GM10248 (cell line): ENCODE measurements at regions of chr16 and their contacts with region 1.

Region 1: DNA sequence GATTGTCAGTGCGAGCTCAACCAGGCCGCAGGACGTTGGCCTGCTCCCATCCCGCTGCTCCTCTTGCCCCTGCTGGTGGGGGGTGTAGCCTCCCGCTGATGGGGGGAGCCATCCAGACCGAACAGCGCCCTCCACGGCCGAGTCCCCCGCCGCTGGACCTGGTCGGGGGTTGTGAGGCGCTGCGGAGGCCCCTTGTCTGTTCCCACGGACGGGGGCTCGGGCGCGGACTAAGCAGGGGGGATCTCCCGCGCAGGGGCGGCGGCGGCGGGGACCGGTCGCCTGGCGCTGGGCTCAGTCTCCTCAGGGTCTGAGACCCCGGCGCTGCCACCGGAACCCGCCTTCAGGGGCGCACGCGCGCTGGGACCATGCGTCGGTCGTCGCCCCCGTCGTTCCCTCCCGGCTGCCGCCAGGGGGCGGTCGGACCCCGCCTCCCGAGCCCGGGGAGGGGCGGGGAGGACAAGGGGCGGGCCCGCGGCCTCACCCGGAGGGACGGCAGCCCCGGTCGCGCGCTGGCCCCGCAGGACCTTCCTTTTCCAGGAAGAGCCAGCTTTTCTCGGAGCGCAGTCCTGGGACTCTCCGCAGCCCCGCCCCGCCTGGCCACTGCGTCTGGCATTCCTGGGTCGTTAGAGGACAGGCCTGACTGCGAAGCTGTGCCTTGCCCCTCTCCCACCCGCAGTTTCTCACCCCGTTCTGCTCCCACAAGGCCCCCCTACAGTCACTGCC is 6.3 kb upstream of the IL32 start:
- DNase-seq: peak; percentile 95
- CTCF ChIP-seq: peak; percentile 93

Region 2: DNA sequence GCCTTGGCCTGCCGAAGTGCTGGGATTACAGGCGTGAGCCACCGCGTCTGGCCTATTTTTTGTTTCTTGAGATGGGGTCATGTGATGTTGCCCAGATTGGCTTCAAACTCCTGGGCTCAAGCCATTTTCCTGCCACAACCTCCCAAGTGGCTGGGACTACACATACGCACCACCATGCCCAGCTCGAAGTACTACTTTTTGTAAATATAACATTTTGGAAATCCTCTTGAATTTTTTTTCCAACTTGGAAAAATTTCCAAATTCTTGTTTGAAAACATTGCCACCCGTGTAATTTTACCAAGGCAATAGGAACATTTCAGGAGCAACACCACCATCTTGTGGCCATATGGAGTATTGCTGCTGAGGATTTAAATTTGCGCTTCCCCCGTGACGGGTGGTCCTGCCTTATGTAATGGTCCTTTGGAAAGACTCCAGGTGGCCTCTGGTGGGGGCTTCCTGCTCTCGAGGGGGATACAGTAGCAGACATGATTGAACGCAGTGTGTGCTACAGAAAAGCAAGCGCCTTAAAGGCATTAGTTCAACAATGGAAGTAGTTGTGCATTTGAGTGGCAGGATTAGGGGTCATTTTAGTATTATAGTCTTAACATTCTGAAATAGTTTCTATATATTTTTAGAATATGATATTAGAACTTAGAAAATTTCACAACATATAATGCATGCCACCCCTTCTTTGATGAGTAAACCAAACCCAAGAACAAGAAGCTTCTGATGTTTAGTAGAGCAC is 139.5 kb before region 1 on chr16:
- CTCF ChIA-PET with region 1: no interaction called
- POLR2A ChIA-PET with region 1: no interaction called
- DNase-seq: peak; percentile 60
- CTCF ChIP-seq: peak; percentile 82

Region 3: GRCh38 chr16:2963723-2964474 is 95.3 kb before region 1 on chr16 and contains the start of gene KREMEN2:
- CTCF ChIA-PET with region 1: no interaction called
- POLR2A ChIA-PET with region 1: no interaction called
- DNase-seq: peak; percentile 56
- CTCF ChIP-seq: no peak

Region 4: DNA sequence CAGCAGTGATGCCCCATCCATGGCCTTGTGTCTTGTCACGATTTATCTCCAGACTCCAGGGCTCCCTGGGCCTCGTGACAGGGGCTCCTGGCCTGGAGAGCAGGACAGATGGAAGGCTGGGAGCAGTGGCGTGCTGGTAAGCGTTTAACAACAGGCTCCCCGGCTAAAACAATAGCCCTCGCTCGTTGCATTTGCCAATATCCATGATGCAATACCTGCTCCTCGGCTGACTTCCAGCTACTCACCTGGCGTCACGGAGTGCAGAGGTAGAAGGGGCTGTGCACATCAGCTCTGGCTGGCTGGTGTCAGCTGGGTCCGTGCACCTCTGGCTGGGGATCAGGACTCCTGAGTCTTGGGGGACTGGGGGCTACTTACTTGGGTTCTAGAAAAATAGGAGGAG is 20.9 kb before region 1 on chr16:
- CTCF ChIA-PET with region 1: interaction called, 75 read pairs
- POLR2A ChIA-PET with region 1: interaction called, 6 read pairs
- DNase-seq: no peak
- CTCF ChIP-seq: no peak

Region 5: GRCh38 chr16:3074860-3075522 is 15.8 kb after region 1 on chr16:
- CTCF ChIA-PET with region 1: interaction called, 38 read pairs
- POLR2A ChIA-PET with region 1: no interaction called
- DNase-seq: peak; percentile 65
- CTCF ChIP-seq: no peak

Region 6: DNA sequence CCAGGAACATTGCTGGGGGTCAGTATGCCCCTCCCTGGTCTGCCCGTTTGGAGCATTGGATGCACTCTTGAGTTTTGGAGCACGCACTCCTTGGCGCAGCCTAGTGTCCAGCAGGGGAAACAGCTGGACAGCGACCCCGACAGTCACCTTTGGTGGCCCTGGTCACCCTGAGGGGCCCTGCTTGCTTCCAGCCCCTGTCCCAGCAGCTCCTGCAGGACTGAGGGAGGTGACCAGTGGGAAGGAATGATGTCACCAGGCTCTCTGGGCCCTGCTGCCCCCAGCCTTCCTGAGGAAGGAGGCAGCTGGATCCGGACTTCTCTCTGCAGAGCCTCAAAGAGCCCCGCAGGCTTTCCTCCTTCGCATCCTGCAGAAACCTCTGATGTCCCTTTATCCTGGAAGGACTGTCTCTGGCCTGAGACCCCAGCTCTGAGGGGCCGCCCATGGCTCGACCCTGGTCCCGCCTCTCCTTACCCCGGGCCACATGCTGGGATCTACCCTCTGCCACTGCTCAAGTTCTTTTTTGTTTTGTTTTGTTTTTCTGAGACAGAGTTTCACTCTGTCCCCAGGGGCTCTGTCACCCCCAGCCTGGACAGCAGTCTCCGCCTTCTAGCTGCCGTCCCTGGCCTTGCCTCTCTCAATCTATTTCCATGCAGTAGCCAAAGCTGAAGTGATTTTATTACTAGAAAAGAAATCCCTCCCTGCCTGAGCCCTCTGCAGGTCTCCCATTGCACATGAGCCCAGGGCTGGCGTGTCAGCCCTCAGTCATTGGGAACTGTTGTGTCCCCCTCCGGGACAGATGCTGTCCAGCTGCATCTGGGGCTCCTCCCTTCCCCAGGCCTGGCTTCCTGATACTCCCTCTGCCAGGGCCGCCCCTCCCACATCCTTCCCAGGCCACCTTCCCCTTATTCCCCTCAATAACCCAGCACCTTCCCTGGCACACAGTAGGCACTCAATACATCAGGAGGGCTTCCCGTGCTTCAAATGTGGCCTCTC is 28.4 kb after region 1 on chr16:
- CTCF ChIA-PET with region 1: interaction called, 10 read pairs
- POLR2A ChIA-PET with region 1: no interaction called
- DNase-seq: peak; percentile 28
- CTCF ChIP-seq: peak; percentile 46

Region 7: GRCh38 chr16:3112058-3112880 is 53.1 kb after region 1 on chr16 and contains the start of gene ZNF205:
- CTCF ChIA-PET with region 1: interaction called, 10 read pairs
- POLR2A ChIA-PET with region 1: no interaction called
- DNase-seq: no peak
- CTCF ChIP-seq: no peak